Gastrocnemius medialis (tissue), 4 donors: ENCODE measurements at regions of chr12 and their contacts with region 1.

Region 1: DNA sequence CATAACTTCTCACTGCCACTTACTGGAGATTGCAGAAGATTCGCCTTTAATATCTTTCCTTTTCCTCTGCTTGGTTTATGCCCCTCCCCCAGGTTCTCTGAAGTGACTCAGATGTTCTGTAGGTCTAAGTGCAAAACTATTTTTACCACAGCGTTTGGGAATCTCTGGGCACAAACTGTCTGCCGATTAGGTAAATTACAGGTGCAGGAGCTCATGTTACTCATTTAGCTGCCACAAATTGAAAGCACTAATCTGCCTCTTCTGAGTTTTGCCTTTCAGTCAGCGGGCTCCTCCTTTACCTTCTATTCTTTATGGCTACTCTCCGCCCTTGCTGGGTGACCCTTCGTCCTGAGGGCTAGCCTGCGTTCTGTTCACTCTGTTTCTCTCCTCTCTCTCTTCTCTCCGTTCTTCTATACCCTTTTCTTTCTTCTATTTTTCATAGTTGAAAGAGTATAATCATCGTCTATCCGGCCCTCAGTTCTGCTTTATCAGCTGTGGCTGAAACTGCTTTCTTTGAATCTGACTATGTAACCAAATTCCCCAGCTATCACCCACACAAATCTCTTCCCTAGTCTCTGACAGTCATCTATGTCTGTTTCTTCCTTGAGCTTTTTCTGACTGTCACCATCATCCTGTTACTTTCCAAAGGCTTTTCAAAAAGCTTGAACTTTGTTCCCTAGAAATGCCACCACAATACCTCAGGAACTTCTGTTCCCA is 4.4 kb upstream of the MYF6 start:
- DNase-seq: peak; percentile 80
- ATAC-seq: peak; percentile 63 to 77
- H3K4me3 ChIP-seq: peak overlapping the region; percentile 31 to 91 (median 58)
- H3K27ac ChIP-seq: peak overlapping the region; percentile 83 to 98 (median 92)
- H3K4me1 ChIP-seq: peaks cover 23 to 25% of the 10 kb centered on the region in 2 donors
- H3K27me3 ChIP-seq: no peaks in the 10 kb centered on the region
- CTCF ChIP-seq: no peak
- POLR2A ChIP-seq: peak; percentile 78 to 89

Region 2: DNA sequence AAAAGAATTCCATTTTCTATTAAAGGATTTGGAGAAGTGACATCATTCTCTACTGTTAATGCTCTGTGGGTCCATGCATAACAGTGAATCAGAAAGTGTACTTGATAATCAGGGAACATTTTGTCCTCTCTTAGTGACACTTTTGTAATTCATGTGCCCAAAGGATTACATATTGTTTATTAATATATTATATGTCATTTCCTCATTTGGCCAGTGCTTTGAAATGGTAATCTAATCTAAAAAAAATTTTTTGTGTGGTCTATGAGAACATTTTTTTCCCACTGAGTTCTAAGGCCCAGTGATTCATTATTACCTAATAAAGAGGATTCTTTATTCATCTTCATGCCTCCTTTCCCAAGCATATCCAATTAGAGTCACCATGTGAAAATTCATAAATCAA is 75.3 kb before region 1 on chr12:
- in situ Hi-C with region 1: loop called in 1 of 4 experiments (anchors 10 kb)
- intact Hi-C with region 1: loop called (anchors 2 kb)
- DNase-seq: no peak
- ATAC-seq: peak; percentile 91 to 94
- H3K4me3 ChIP-seq: no peak overlapping the region
- H3K27ac ChIP-seq: peak overlapping the region; percentile 56 to 74 (median 64)
- H3K4me1 ChIP-seq: peaks cover 31 to 35% of the 10 kb centered on the region in 2 donors
- H3K27me3 ChIP-seq: no peaks in the 10 kb centered on the region
- CTCF ChIP-seq: no peak
- POLR2A ChIP-seq: no peak

Region 3: DNA sequence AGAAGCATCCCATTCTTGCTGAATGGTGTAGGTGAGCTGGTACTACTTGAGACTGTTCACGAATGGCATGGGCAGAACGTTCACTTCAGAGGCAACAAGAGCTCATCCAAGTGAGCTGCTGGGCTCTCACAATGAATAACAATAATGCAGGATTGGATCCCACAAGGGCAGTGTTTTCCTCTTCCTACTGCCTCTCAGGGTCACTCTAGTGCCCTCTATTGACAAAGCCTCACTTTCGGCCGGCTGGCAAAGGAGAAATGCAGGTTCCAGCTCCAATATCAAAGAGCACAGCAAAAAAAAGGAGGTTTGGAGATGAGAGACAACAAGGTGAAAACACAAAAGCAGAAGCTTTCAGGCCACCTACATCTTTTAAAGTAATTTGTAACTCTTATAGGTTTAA is 70.2 kb before region 1 on chr12:
- in situ Hi-C with region 1: loop called in 1 of 4 experiments (anchors 10 kb)
- intact Hi-C with region 1: loop called (anchors 2 kb)
- DNase-seq: peak in 1 of 2 donors; percentile 30
- ATAC-seq: no peak
- H3K4me3 ChIP-seq: no peak overlapping the region
- H3K27ac ChIP-seq: peak overlapping the region in 2 of 4 donors; percentile 3 to 11
- H3K4me1 ChIP-seq: peaks cover 30 to 40% of the 10 kb centered on the region in 2 donors
- H3K27me3 ChIP-seq: no peaks in the 10 kb centered on the region
- CTCF ChIP-seq: no peak
- POLR2A ChIP-seq: no peak

Region 4: DNA sequence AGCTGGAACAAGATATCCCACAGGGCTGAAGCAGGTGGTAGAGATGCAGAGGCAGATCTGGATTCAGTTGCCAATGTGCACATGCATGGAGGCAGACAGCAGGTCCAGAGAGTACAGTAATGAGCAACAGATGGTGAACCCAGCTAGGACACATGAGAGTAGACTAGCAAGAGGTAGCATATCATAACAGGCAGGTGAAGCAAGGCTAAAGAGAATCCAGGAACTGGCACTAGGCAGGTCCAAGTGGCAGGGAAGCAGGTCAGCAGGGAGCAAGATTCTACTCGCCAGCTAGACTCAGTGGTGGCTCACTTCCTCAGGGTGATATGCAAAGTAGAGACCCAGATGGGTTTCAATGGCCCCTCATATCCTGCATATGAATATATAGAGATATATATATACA is 10.9 kb before region 1 on chr12:
- in situ Hi-C with region 1: no loop called
- intact Hi-C with region 1: loop called (anchors 1 kb)
- DNase-seq: peak; percentile 85 to 91
- ATAC-seq: peak; percentile 100
- H3K4me3 ChIP-seq: no peak overlapping the region
- H3K27ac ChIP-seq: peak overlapping the region; percentile 61 to 92 (median 81)
- H3K4me1 ChIP-seq: peaks cover 25 to 31% of the 10 kb centered on the region in 2 donors
- H3K27me3 ChIP-seq: no peaks in the 10 kb centered on the region
- CTCF ChIP-seq: no peak
- POLR2A ChIP-seq: no peak

Region 5: GRCh38 chr12:80756875-80757274 is 53.8 kb after region 1 on chr12:
- in situ Hi-C with region 1: no loop called
- intact Hi-C with region 1: no loop called
- DNase-seq: no peak
- ATAC-seq: peak; percentile 68 to 80
- H3K4me3 ChIP-seq: no peak overlapping the region
- H3K27ac ChIP-seq: no peak overlapping the region
- H3K4me1 ChIP-seq: no peaks in the 10 kb centered on the region
- H3K27me3 ChIP-seq: no peaks in the 10 kb centered on the region
- CTCF ChIP-seq: no peak
- POLR2A ChIP-seq: no peak

Region 6: GRCh38 chr12:81779216-81779615 is 1076.2 kb after region 1 on chr12:
- in situ Hi-C with region 1: no loop called
- intact Hi-C with region 1: no loop called
- DNase-seq: no peak
- ATAC-seq: no peak
- H3K4me3 ChIP-seq: no peak overlapping the region
- H3K27ac ChIP-seq: no peak overlapping the region
- H3K4me1 ChIP-seq: no peaks in the 10 kb centered on the region
- H3K27me3 ChIP-seq: no peaks in the 10 kb centered on the region
- CTCF ChIP-seq: no peak
- POLR2A ChIP-seq: no peak